Activated B cell treated with CpG ODN at 0.5 μM for 24 hours (primary cell): ENCODE measurements at regions of chr6 and their contacts with region 1.

Region 1: DNA sequence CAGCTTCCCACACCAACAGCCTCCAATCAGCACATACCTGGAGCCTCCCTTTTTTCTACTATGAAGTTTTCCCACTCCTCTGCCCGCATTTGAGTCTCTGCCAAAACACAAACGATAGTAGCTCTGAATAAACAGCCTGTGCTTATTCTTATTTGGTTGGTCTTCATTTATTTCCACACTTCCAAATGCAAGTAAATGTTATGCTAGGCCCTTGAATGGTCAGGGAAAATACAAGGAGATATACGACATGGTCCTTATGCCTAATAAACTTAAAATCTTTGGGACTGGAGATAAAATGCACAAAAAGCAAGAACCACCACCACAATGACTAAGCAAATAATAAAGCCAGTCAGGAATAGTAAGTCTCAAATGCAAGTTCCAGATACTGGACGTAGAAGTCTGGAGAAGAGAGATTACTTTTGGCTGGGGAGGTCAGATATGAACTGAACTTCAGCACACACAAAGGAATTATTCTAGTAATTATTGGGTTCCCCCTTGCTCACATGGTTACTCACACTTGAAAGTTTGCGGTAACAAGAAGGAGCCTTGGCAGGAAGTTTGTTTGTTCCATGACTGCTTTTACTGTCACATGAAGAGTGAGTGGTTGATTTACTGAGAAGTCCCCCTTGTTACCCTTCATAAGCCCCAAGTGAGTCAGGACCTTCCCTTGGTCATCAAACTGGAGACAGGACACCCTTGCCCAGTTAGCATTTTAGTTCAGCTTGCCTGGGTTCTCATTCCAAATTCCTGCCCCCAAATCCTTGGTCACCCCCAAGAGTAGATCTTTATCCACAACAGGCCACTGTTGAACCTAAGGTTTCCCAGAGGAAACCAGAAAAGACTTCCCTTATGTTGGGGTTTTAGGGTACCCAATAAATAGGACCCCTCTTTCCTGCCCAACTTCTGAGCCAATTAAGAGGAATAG is 511.2 kb upstream of the JARID2 start:
- DNase-seq: no peak
- ATAC-seq: peak; percentile 81
- H3K4me3 Mint-ChIP-seq: peak overlapping the region; percentile 71
- H3K27ac Mint-ChIP-seq: peak overlapping the region; percentile 76
- H3K4me1 Mint-ChIP-seq: peaks cover 99% of the 10 kb centered on the region
- H3K27me3 Mint-ChIP-seq: no peaks in the 10 kb centered on the region
- CTCF ChIP-seq: no peak

Region 2: DNA sequence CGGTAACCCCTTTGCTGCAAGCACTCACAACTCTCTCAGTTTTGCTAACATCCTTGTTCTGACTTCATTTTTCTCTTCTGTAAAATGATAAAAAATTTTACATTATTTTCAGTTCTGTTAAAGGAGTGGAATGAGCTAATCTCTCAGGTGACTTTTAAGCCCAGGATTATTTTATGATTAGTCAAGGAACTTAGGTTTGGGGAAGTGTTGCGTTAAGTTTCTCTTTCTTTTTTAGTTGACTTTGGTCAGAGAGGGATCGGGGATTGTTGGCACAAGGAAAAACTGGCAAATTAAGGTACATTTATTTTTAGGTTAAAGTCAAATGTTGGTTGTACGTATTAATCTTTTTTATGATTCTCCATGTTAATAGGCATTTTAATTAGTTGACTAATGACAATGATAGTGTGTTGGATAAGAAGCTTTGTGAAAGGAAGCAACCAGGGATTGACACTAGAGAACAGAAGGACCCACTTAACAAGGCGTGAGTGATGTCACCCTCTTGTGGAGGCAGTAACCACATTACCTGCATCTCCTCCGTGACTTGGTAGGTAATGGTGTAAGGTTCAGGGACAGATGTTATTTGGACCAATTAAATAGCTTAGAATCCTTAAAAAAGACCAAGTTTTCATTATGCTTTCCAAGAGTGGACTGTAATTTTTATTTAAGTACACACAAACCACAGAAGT is 585.5 kb before region 1 on chr6:
- CTCF ChIA-PET with region 1: no interaction called
- POLR2A ChIA-PET with region 1: no interaction called
- intact Hi-C with region 1: no loop called
- DNase-seq: no peak
- ATAC-seq: no peak
- H3K4me3 Mint-ChIP-seq: peak overlapping the region; percentile 50
- H3K27ac Mint-ChIP-seq: peak overlapping the region; percentile 52
- H3K4me1 Mint-ChIP-seq: peaks cover 30% of the 10 kb centered on the region
- H3K27me3 Mint-ChIP-seq: no peaks in the 10 kb centered on the region
- CTCF ChIP-seq: no peak

Region 3: DNA sequence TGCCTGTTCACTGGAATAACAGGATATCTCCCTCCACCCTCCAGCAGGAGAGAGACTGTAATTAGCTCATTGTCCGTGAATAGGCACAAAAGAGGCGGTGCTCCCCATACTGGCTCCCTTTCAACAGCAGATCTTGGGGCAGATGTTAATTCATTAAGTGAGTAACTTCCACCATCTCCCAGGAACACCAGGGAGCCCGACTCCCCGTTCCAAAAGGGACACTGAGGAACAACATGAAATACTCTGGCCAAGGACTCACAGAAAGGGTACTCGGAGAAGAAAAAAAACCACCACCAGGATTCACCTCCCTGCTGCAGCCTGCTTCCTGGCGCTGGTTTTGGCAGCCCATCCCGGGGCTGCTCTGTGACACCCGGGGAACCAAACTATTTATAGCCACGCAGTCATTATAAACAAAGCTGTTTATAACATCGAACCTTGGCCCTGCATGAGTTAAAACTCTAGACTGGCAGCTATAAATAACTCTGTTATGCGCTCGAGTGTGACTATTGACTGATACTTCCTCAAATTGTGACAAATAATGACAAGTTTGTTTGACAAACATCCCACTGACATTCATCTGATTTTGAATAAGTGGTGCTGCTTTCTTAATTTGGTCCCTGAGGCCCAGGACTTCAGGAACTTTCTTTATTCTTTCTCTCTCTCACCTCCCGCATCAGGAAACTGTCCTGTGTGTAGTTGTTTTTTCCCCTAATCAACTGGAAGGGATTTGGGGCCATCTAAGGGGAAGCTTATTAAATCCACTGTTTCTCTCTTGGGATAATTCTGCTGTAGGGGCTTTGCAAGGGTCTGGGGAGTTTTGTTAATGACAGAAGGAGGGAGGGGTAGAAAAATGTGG is 95.5 kb before region 1 on chr6:
- CTCF ChIA-PET with region 1: no interaction called
- POLR2A ChIA-PET with region 1: interaction called, 5 read pairs
- intact Hi-C with region 1: loop called (anchors 2 kb)
- DNase-seq: no peak
- ATAC-seq: peak; percentile 60
- H3K4me3 Mint-ChIP-seq: peak overlapping the region; percentile 86
- H3K27ac Mint-ChIP-seq: peak overlapping the region; percentile 96
- H3K4me1 Mint-ChIP-seq: peaks cover 82% of the 10 kb centered on the region
- H3K27me3 Mint-ChIP-seq: no peaks in the 10 kb centered on the region
- CTCF ChIP-seq: no peak

Region 4: GRCh38 chr6:14718861-14719260 is 15.8 kb before region 1 on chr6:
- CTCF ChIA-PET with region 1: no interaction called
- POLR2A ChIA-PET with region 1: no interaction called
- intact Hi-C with region 1: loop called (anchors 1 kb)
- DNase-seq: no peak
- ATAC-seq: no peak
- H3K4me3 Mint-ChIP-seq: peak overlapping the region; percentile 67
- H3K27ac Mint-ChIP-seq: peak overlapping the region; percentile 86
- H3K4me1 Mint-ChIP-seq: peaks cover 85% of the 10 kb centered on the region
- H3K27me3 Mint-ChIP-seq: no peaks in the 10 kb centered on the region
- CTCF ChIP-seq: no peak

Region 5: GRCh38 chr6:14865531-14866100 is 130.9 kb after region 1 on chr6:
- CTCF ChIA-PET with region 1: no interaction called
- POLR2A ChIA-PET with region 1: no interaction called
- intact Hi-C with region 1: loop called (anchors 5 kb)
- DNase-seq: no peak
- ATAC-seq: peak; percentile 93
- H3K4me3 Mint-ChIP-seq: peak overlapping the region; percentile 52
- H3K27ac Mint-ChIP-seq: peak overlapping the region; percentile 72
- H3K4me1 Mint-ChIP-seq: peaks cover 28% of the 10 kb centered on the region
- H3K27me3 Mint-ChIP-seq: no peaks in the 10 kb centered on the region
- CTCF ChIP-seq: no peak